ENCODE measurements at regions of chr6 and their contacts with region 1.

Region 1: DNA sequence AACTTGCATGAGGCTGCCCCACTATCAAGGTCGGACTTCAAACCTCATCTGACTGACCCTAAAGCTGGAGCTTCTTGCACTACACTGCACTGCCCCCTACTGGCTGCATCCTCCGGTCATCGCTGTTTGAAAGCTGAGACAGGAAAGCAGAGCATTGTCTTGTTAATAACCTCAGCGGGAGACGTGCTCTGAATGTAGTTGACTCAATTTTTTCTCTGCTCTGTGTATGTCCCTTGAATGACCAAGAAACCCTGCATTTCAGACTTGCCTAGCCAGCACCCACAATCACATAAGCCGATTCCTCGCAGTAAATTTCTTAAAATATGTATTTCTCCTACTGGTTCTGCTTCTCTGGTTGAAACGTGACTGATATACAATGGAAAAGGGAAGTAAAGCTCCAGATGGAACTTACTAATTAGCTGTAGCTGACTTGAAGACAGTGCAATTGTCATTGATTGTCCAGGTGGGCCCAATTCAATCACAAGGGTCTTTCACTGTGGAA is 27.8 kb downstream of the TCF21 start:
- DNase-seq: peak; percentile 91
- ATAC-seq: peak; percentile 60
- H3K4me3 Mint-ChIP-seq: no peak overlapping the region
- H3K27ac Mint-ChIP-seq: no peak overlapping the region
- H3K4me1 Mint-ChIP-seq: peaks cover 3% of the 10 kb centered on the region
- H3K27me3 Mint-ChIP-seq: peaks cover 19% of the 10 kb centered on the region

Region 2: GRCh38 chr6:133184798-133185372 is 731.8 kb before region 1 on chr6:
- CTCF ChIA-PET with region 1: interaction called, 4 read pairs
- POLR2A ChIA-PET with region 1: no interaction called
- intact Hi-C with region 1: loop called (anchors 2 to 10 kb)
- DNase-seq: no peak
- ATAC-seq: no peak
- H3K4me3 Mint-ChIP-seq: no peak overlapping the region
- H3K27ac Mint-ChIP-seq: no peak overlapping the region
- H3K4me1 Mint-ChIP-seq: no peaks in the 10 kb centered on the region
- H3K27me3 Mint-ChIP-seq: peaks cover 3% of the 10 kb centered on the region

Region 3: GRCh38 chr6:133223458-133224029 is 693.2 kb before region 1 on chr6:
- CTCF ChIA-PET with region 1: no interaction called
- POLR2A ChIA-PET with region 1: no interaction called
- intact Hi-C with region 1: no loop called
- DNase-seq: no peak
- ATAC-seq: no peak
- H3K4me3 Mint-ChIP-seq: no peak overlapping the region
- H3K27ac Mint-ChIP-seq: no peak overlapping the region
- H3K4me1 Mint-ChIP-seq: no peaks in the 10 kb centered on the region
- H3K27me3 Mint-ChIP-seq: peaks cover 3% of the 10 kb centered on the region

Region 4: GRCh38 chr6:133837801-133838349 is 78.8 kb before region 1 on chr6:
- CTCF ChIA-PET with region 1: interaction called, 35 read pairs
- POLR2A ChIA-PET with region 1: no interaction called
- intact Hi-C with region 1: loop called (anchors 1 kb)
- DNase-seq: peak; percentile 81
- ATAC-seq: peak; percentile 74
- H3K4me3 Mint-ChIP-seq: peak overlapping the region; percentile 32
- H3K27ac Mint-ChIP-seq: no peak overlapping the region
- H3K4me1 Mint-ChIP-seq: peaks cover 5% of the 10 kb centered on the region
- H3K27me3 Mint-ChIP-seq: peaks cover 18% of the 10 kb centered on the region

Region 5: DNA sequence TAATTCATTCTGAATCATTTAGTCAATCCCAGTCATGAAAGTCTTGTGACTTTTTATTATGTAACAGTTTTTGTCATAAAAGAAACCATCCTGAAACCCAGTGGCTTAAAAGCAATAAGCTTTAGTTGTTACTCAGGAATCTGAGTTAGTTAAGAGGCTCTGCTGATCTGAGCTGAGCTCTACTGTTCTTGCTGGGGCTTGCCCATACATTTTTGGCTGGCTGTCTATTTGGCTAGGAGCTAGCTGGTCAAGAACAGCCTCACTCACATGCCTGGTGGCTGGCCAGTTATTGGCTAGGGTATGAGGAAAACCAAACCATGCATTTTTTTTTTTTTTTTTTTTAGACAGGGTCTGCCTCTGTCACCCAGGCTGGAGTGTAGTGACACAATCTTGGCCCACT is 17.1 kb before region 1 on chr6:
- CTCF ChIA-PET with region 1: interaction called, 16 read pairs
- POLR2A ChIA-PET with region 1: no interaction called
- intact Hi-C with region 1: no loop called
- DNase-seq: no peak
- ATAC-seq: no peak
- H3K4me3 Mint-ChIP-seq: no peak overlapping the region
- H3K27ac Mint-ChIP-seq: no peak overlapping the region
- H3K4me1 Mint-ChIP-seq: no peaks in the 10 kb centered on the region
- H3K27me3 Mint-ChIP-seq: peaks cover 47% of the 10 kb centered on the region

Region 6: GRCh38 chr6:134097114-134097707 is 180.5 kb after region 1 on chr6:
- CTCF ChIA-PET with region 1: interaction called, 360 read pairs
- POLR2A ChIA-PET with region 1: no interaction called
- intact Hi-C with region 1: no loop called
- DNase-seq: peak; percentile 79
- ATAC-seq: no peak
- H3K4me3 Mint-ChIP-seq: no peak overlapping the region
- H3K27ac Mint-ChIP-seq: no peak overlapping the region
- H3K4me1 Mint-ChIP-seq: no peaks in the 10 kb centered on the region
- H3K27me3 Mint-ChIP-seq: peaks cover 13% of the 10 kb centered on the region

Region 7: GRCh38 chr6:134689641-134690040 is 772.9 kb after region 1 on chr6:
- CTCF ChIA-PET with region 1: no interaction called
- POLR2A ChIA-PET with region 1: no interaction called
- intact Hi-C with region 1: no loop called
- DNase-seq: no peak
- ATAC-seq: no peak
- H3K4me3 Mint-ChIP-seq: no peak overlapping the region
- H3K27ac Mint-ChIP-seq: no peak overlapping the region
- H3K4me1 Mint-ChIP-seq: no peaks in the 10 kb centered on the region
- H3K27me3 Mint-ChIP-seq: peaks cover 13% of the 10 kb centered on the region